ENCODE measurements at regions of chr14 and their contacts with region 1.

Region 1: DNA sequence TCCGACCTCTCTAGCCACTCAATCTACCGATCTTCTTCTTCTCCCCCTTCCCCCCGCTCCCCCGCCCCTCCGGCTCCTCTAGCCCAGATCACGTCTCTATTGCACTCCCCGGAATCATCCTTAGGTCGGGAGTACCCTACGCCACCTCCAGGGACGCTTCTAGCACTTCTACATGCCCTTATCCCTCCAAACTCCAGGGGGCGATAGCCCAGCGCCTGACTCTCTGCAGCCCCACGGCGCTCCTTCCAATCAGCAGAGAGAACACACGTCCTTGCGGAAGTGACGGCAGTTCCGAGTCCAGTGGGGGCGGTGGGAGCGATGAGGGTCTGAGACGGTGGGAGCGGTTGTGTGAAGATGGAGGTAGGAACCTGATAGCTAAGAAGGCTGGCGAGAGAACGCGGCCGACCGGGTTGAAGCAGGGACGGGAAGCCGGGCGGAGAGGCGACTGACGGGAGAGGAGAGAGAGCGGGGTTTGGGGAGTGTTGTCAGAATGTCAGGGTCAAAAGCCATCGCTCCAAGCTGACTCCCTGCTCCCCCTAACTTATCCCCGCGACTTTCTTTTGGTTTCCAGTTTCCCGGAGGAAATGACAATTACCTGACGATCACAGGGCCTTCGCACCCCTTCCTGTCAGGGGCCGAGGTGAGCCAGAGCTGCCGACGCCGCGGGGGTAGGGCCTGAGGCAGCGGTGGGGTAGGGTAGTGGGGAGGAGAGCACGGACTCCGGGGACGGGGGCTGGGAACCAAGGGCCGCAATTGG is at the starts of genes RAB2B and TOX4:
- DNase-seq: peak; percentile 95 to 100 (median 98)

Region 2: GRCh38 chr14:21437063-21437901 is 39.8 kb before region 1 on chr14:
- intact Hi-C with region 1: loop called (anchors 2 kb)
- DNase-seq: peak; percentile 98 to 100 (median 99)

Region 3: GRCh38 chr14:21498553-21499526 is 21.7 kb after region 1 on chr14:
- intact Hi-C with region 1: no loop called
- DNase-seq: no peak

Region 4: DNA sequence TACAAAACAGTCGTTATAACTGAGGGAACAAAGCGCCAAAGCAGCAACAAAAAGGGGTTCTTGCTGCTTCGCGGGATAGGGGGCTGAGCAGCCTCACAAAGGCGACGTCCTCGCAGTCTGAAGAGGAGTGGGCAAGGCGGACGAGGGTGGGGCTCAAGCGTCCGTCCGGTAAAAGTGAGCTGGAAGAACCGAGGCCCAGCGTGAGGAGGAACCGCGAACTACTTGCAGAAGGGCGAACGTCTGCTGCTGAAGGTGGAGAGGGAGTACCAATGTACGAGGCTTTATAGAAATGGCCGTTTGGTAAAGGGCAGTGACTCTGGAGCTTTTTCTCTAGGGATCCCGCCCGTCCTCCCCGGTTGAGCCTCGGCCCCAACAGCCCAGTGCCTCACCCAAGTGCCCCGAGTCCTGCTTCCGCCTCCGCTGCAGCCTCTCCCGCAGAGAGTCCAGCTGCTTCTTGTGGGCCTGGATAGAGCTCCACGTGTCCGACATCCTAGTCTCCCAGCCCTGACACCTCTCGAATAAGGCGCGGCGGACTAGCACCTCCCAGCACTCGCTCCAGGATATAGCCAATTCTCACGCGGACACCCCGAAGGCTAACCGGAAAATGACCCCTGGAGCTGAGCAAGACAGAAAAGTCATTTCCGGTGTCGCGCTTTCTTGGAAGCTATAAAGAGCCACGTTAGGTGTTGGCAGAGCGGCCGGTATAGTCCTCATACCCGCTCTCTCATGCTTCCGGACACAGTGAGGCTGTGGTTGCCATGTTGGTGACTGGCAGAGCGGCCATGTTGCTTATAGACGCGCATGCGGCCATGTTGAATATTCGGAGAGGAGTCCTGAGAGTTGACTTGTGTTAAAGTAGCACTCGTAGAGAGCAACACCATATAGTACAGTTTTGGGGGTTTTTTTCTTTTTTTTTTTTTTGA is 33.9 kb after region 1 on chr14 and contains the start of gene METTL3:
- intact Hi-C with region 1: loop called (anchors 1 kb)
- DNase-seq: peak; percentile 93 to 99 (median 96)

Region 5: DNA sequence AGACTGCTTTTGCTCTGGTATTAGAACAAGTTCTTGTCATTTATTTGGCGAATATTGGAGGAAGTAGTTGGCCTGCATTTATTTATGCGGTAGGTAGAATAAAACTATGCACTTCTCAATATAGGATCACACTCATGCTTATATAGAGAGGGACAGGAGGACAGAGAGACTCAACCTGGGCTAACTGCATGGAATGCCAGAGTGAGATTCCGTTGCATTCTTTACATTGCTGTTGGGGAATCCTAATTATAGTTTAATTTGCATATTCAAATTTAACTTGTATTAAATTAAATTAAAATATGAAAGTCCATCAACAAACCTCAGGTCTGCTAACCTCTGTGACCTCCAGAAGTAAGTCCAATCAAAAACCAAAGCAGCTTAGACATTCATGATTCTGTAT is 76.2 kb after region 1 on chr14:
- intact Hi-C with region 1: no loop called
- DNase-seq: no peak

Region 6: GRCh38 chr14:21652209-21652808 is 175.2 kb after region 1 on chr14:
- intact Hi-C with region 1: no loop called
- DNase-seq: no peak